ENCODE measurements at regions of chr6 and their contacts with region 1.

Region 1: GRCh38 chr6:24340998-24341938 is 16.6 kb downstream of the DCDC2 start:
- DNase-seq: peak; percentile 100
- ATAC-seq: peak; percentile 99
- H3K4me3 ChIP-seq: peak overlapping the region in 1 of 3 experiments; percentile 8; a peak in 1 of 6 replicates
- H3K27ac ChIP-seq: peak overlapping the region; percentile 70
- H3K4me1 ChIP-seq: peaks cover 58% of the 10 kb centered on the region
- H3K27me3 ChIP-seq: no peaks in the 10 kb centered on the region
- CTCF ChIP-seq: no peak
- EP300 ChIP-seq: peak; percentile 69 to 96; a peak in 3 of 4 replicates
- POLR2A ChIP-seq: no peak
- RAD21 ChIP-seq: 0 out of 2 replicates have a peak, but pooled peaks have one; percentile 7

Region 2: DNA sequence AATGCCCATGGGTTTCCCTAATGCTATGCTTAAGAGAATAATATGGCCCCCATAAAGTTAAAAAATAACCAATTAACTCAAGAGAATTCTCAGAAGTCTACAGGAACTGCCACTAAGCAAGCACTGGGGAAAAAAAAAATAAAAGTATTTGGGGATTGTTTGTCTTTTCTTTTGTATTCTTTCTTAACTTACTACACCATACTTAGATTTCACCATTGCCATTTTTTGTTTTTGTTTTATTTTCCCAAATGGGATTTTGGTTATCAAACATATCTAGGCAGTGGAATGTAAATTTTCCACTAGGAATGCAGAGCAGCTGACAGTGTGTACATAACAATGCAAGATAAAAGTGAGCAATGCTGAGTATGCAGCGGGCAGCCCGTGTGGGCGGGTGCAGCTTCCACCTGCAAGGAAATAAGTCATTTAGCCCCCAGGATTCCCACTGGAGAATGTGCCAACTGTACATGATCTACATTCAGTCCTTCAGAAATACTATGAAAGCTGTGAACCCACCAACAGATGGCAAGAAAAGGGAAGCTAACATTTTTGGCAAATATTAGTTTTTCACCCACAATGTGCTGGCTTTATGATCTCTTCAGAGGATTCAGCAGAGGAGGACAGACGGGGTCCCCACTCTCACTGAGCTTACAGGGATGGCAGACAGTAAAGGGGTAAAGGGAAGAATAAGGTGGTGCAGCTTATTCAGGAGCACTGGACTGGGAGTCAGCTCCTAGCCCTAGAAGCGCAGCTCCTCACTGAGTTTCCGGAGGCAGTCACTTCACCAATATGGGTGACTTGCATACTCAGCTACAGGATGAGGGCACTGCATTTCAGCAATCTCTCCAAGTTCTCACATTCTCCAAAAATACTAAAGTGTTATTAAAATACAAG is 27.8 kb before region 1 on chr6:
- CTCF ChIA-PET with region 1: no interaction called
- POLR2A ChIA-PET with region 1: no interaction called
- in situ Hi-C with region 1: no loop called
- intact Hi-C with region 1: loop called (anchors 1 kb)
- DNase-seq: peak; percentile 93
- ATAC-seq: peak; percentile 99
- H3K4me3 ChIP-seq: peak overlapping the region in 1 of 3 experiments; percentile 13; a peak in 1 of 6 replicates
- H3K27ac ChIP-seq: peak overlapping the region; percentile 73
- H3K4me1 ChIP-seq: peaks cover 61% of the 10 kb centered on the region
- H3K27me3 ChIP-seq: no peaks in the 10 kb centered on the region
- CTCF ChIP-seq: 0 out of 2 replicates have a peak, but pooled peaks have one; percentile 12
- EP300 ChIP-seq: peak in 1 of 2 experiments; percentile 93; a peak in 2 of 4 replicates
- POLR2A ChIP-seq: no peak
- RAD21 ChIP-seq: peak; percentile 33; the same call in 1 of the 2 replicates

Region 3: DNA sequence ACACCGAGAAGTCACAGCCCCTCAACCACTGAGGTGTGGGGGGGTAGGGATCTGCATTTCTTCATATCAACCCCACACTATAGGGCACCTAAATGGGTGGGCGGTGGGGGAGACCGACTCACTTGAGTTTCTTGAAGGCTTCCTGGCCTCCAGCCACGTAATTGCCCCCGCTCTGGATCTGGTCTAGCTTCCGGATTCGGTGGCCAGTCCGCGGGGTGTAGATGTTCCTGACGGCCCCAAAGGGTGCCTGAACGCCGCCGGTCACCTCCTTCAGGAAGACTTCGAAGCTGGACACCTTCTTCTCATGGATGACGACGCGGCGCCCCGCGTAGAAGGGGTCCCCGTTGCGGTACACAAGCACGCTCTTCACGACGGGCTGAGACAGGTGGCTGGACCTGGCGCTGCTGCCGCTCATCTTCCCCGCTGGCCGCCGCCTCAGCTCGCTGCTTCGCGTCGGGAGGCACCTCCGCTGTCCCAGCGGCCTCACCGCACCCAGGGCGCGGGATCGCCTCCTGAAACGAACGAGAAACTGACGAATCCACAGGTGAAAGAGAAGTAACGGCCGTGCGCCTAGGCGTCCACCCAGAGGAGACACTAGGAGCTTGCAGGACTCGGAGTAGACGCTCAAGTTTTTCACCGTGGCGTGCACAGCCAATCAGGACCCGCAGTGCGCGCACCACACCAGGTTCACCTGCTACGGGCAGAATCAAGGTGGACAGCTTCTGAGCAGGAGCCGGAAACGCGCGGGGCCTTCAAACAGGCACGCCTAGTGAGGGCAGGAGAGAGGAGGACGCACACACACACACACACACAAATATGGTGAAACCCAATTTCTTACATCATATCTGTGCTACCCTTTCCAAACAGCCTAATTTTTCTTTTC is 16.3 kb after region 1 on chr6 and contains the start of gene DCDC2:
- CTCF ChIA-PET with region 1: no interaction called
- POLR2A ChIA-PET with region 1: interaction called, 6 read pairs
- in situ Hi-C with region 1: no loop called
- intact Hi-C with region 1: loop called (anchors 1 kb)
- DNase-seq: peak; percentile 87
- ATAC-seq: peak; percentile 91
- H3K4me3 ChIP-seq: peak within 1 kb of the TSS; percentile 69 to 81 (median 81)
- H3K27ac ChIP-seq: peak within 1 kb of the TSS; percentile 69
- H3K4me1 ChIP-seq: peaks cover 40% of the 10 kb centered on the region
- H3K27me3 ChIP-seq: no peaks in the 10 kb centered on the region; a peak in 1 of 5 replicates
- CTCF ChIP-seq: peak; percentile 35
- EP300 ChIP-seq: 0 out of 4 replicates have a peak, but pooled peaks of 1 of the 2 experiments have one; percentile 19
- POLR2A ChIP-seq: peak; percentile 66 to 70
- RAD21 ChIP-seq: peak; percentile 58; the same call in 1 of the 2 replicates
- total RNA-seq, gene DCDC2: 36.2 and 40.4 TPM in 2 replicates